Panc1 (cell line): ENCODE measurements at regions of chr1 and their contacts with region 1.

Region 1: GRCh38 chr1:169466259-169467230 is 19.2 kb downstream of the SLC19A2 start:
- DNase-seq: no peak
- ATAC-seq: peak; percentile 63; the same call in 1 of the 2 replicates
- H3K4me3 ChIP-seq: no peak overlapping the region
- H3K27ac ChIP-seq: no peak overlapping the region
- H3K4me1 ChIP-seq: no peaks in the 10 kb centered on the region
- H3K27me3 ChIP-seq: no peaks in the 10 kb centered on the region
- CTCF ChIP-seq: peak; percentile 60

Region 2: DNA sequence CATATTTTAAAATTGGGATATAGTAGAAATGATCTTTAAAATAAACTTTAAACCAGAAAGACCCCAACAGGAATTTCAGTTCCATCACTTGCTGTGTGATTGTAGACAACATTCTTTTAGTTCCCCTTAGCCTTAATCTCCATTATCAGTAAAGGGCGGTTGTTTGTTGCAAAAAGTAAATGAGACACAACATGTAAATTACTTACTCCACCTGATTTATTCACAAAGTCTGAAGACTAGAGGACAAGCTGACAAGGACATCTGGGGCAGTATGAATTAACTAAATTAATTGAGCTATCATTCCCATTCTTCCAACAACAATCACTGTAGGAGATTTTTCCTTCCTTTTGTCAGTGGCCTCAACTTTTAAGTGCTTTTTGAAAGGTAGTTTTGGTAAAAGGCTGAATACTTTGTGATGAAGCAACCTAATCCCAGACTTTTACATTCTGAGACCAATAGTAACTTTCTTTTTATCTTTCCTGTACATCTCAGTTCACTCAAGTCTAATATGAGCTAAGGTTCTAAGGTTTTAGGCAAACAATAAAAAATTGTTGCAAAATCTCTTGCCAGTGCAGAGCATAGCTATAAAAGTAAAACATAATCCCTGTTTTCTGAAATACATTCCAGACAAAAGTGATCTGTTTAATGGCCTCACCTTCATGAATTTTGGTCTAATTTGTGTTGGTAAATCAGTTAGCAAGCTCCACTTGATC is 13.0 kb after region 1 on chr1:
- CTCF ChIA-PET with region 1: no interaction called
- POLR2A ChIA-PET with region 1: interaction called, 11 read pairs
- in situ Hi-C with region 1: no loop called
- intact Hi-C with region 1: no loop called
- DNase-seq: no peak
- ATAC-seq: no peak
- H3K4me3 ChIP-seq: no peak overlapping the region
- H3K27ac ChIP-seq: no peak overlapping the region
- H3K4me1 ChIP-seq: peaks cover 13% of the 10 kb centered on the region
- H3K27me3 ChIP-seq: no peaks in the 10 kb centered on the region
- CTCF ChIP-seq: no peak

Region 3: GRCh38 chr1:169538998-169539871 is 72.7 kb after region 1 on chr1:
- CTCF ChIA-PET with region 1: no interaction called
- POLR2A ChIA-PET with region 1: no interaction called
- in situ Hi-C with region 1: no loop called
- intact Hi-C with region 1: no loop called
- DNase-seq: no peak
- ATAC-seq: peak; percentile 51
- H3K4me3 ChIP-seq: no peak overlapping the region
- H3K27ac ChIP-seq: no peak overlapping the region
- H3K4me1 ChIP-seq: no peaks in the 10 kb centered on the region
- H3K27me3 ChIP-seq: no peaks in the 10 kb centered on the region; the same call in 1 of the 2 replicates
- CTCF ChIP-seq: no peak